Testis (tissue), 5 donors: ENCODE measurements at regions of chr6 and their contacts with region 1.

Region 1: DNA sequence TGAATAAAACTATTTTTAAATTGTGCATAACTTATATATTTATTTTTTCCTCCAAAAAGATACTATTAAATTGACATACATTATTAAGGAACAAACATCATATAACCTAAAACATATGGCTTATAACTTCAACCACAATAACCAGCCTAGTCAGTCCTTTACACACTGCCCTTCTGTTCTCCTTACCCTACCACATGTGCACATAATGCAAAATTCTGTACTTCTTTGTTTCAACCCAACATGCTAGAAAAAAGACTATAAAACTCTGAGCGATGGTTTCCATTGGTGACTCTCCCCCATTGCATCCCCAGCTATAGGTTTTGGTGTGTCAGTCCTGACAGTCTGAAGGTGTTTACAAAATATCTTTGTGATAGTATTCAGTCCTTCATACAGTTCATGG is 14.8 kb upstream of the TTK start:
- DNase-seq: no peak
- H3K4me3 ChIP-seq: no peak overlapping the region
- H3K27ac ChIP-seq: no peak overlapping the region
- H3K4me1 ChIP-seq: no peaks in the 10 kb centered on the region
- H3K27me3 ChIP-seq: no peaks in the 10 kb centered on the region
- CTCF ChIP-seq: no peak
- POLR2A ChIP-seq: no peak

Region 2: DNA sequence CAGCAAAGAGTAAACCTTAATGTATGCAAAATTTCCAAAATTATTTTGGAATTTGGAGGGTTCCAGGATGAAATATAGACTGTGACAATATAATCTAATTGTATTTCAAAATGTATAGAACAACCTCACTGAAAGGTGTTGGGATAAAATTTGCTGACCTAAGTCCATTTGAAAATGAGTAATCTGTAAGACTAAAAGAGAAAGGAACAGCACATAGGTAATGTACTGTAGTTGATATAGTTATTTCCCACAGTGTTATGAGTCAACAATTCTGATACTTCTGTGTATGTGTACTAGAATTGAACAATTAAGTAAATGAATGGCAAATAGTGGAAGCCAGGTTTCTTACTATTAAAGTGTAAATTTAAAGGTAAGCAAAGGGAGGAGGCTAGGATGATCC is 18.4 kb before region 1 on chr6:
- intact Hi-C with region 1: loop called (anchors 2 kb)
- DNase-seq: no peak
- H3K4me3 ChIP-seq: no peak overlapping the region
- H3K27ac ChIP-seq: no peak overlapping the region
- H3K4me1 ChIP-seq: no peaks in the 10 kb centered on the region
- H3K27me3 ChIP-seq: no peaks in the 10 kb centered on the region
- CTCF ChIP-seq: no peak
- POLR2A ChIP-seq: no peak